Endothelial cell of umbilical vein (primary cell): ENCODE measurements at regions of chr2 and their contacts with region 1.

Region 1: DNA sequence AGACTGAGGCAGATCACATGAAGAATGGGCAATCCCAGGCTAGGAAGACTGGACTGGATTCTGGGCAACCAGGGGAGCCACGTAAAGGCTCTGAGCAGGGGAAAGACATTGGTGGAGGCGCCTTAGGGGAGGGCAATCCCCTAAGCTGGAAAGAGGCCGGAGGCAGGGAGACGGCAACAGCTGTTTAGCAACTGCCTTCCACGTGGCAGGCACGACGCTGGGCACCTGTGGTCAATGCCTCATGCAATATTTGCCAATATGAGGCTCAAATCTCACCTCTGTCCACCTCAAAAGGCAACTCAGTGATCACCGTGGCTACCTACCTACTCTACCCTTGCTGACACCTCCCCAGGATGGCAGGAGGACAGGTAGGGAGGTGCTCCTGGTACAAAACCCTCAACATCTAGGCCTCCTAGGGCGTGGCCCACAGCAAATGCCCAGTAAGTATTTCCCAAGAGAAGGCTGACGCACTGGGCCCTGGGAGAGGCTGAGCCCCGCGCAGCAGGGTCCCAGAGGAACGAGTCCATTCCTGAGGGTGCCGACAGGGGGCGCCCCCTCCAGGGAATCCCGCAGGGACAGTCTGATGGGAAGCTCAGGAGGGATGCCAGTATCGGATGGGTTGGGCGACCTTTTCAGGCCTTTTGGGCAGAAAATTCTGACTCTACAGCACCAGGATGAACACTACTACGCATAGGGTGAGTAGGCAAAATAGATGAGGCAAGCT is 8.9 kb downstream of the BOLA3 start:
- DNase-seq: no peak
- H3K4me3 ChIP-seq: no peak overlapping the region
- H3K27ac ChIP-seq: no peak overlapping the region
- H3K4me1 ChIP-seq: no peaks in the 10 kb centered on the region
- H3K27me3 ChIP-seq: no peaks in the 10 kb centered on the region
- CTCF ChIP-seq: peak in 1 of 2 donors; percentile 11
- POLR2A ChIP-seq: no peak

Region 2: DNA sequence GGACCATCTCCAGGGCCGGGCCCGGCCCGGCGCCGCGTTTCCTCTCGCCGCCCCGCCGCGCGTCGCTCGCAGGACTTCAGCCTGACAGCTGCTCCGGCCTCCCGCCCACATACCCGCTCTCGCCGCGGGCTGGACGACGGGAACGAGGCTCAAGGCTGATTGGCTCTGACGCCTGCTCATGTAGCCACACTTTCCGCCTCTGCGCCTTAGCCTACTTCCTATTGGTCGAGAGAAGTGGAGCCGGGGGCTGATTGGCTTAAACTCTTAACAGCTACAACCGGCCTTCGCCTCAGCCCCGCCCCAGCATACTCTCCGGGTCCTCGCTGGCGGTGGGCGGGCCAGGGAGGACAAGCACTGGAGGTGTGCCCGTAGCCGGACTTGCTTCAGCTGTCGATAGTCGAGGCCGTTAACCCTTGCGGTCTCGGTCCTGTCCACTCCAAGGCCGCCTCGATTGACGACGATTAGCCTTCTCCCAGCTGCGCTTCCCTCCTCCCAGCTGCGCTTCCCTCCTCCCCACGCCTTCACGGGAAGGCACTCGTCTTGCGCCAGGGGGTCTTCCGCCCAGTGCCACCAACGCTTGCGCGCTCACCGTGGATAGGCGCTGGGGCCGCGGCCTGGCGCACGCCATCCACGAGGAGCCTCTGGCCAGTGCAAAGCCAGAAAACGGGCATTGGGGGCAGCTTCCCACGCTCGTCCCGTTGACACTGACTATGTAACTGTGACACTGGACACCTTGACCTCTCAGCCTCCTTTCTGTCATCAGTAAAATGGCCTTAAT is 905.4 kb before region 1 on chr2 and contains the start of gene PRADC1:
- CTCF ChIA-PET with region 1: no interaction called
- POLR2A ChIA-PET with region 1: no interaction called
- dilution Hi-C with region 1: no loop called
- intact Hi-C with region 1: loop called (anchors 5 kb)
- DNase-seq: peak; percentile 100
- H3K4me3 ChIP-seq: peak within 1 kb of the TSS; percentile 76 to 90 (median 85)
- H3K27ac ChIP-seq: peak within 1 kb of the TSS; percentile 84
- H3K4me1 ChIP-seq: peaks cover 21% of the 10 kb centered on the region
- H3K27me3 ChIP-seq: no peaks in the 10 kb centered on the region
- CTCF ChIP-seq: no peak
- POLR2A ChIP-seq: no peak
- total RNA-seq, gene PRADC1: 19.6 and 21.8 TPM in 2 replicates